ENCODE measurements at regions of chr13 and their contacts with region 1.

Region 1: GRCh38 chr13:31192306-31192705 is 7.5 kb upstream of the B3GLCT start:
- DNase-seq: peak in 41 of 42 donors; percentile 51 to 88 (median 73)

Region 2: DNA sequence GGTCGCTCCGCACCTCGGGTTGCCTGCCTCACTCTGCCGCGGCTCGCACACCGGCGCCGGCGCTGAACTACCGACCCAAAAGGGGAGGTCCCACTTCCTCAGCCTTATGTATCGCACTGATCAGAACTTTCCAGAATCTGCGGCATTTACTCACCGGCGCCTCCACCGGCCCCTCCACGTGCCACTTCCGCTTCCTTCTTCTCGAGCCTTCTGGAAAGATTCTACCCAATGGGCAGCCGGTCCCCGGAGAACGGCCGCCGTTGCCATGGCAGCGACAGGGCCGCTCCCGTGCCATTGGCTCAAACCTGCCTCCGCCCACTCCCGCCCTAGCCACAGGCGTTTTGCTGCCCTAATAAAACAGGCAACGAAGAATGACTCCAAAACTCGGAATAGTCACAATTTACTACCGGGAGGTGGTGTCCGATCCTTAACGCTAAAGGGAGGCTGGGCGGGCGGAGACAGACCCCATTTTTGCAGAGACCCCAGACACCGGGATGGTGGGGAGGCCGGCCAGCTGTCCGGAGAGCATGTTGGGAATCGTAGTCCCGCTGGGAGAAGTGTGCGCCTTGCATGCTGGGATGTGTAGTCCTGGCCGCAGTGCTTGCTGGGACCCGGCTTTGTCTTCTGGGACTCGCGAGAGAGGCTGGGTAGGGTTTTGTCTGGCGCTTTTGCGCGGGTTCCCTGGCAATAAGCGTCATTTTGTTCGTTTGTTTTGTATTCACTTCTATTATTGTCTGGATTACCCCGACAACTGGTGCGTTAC is 30.3 kb before region 1 on chr13 and contains the start of gene HSPH1:
- intact Hi-C with region 1: loop called (anchors 2 kb)
- DNase-seq: peak; percentile 96 to 99 (median 98)